ENCODE measurements at regions of chr17 and their contacts with region 1.

Region 1: GRCh38 chr17:13776027-13776588 is 174.4 kb upstream of the HS3ST3A1 start:
- DNase-seq: peak; percentile 78
- H3K4me3 Mint-ChIP-seq: peak overlapping the region; percentile 22
- H3K27ac Mint-ChIP-seq: peak overlapping the region; percentile 80
- H3K4me1 Mint-ChIP-seq: peaks cover 25% of the 10 kb centered on the region
- H3K27me3 Mint-ChIP-seq: no peaks in the 10 kb centered on the region
- CTCF ChIP-seq: no peak

Region 2: DNA sequence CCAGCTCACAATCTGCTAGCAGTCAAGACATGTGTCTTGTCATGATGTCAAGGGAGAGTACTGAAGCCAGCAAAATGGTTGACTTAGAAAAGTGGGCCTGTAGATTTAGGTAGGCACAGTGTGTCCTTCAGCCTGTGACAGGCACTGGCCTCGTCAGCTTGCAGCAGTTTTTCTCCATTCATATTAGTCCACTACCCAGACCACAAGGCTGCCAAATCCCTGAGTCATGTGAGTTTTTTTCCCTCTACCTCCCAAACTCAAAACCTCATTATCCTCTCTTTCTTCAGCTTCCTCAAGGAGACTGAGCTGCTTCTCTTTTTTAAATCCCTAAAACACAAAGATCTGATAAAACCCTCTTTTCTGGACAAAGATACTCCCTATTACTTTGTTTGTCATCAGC is 71.8 kb before region 1 on chr17:
- CTCF ChIA-PET with region 1: no interaction called
- POLR2A ChIA-PET with region 1: no interaction called
- intact Hi-C with region 1: no loop called
- DNase-seq: peak; percentile 35
- H3K4me3 Mint-ChIP-seq: no peak overlapping the region
- H3K27ac Mint-ChIP-seq: no peak overlapping the region
- H3K4me1 Mint-ChIP-seq: peaks cover 11% of the 10 kb centered on the region
- H3K27me3 Mint-ChIP-seq: no peaks in the 10 kb centered on the region
- CTCF ChIP-seq: no peak

Region 3: DNA sequence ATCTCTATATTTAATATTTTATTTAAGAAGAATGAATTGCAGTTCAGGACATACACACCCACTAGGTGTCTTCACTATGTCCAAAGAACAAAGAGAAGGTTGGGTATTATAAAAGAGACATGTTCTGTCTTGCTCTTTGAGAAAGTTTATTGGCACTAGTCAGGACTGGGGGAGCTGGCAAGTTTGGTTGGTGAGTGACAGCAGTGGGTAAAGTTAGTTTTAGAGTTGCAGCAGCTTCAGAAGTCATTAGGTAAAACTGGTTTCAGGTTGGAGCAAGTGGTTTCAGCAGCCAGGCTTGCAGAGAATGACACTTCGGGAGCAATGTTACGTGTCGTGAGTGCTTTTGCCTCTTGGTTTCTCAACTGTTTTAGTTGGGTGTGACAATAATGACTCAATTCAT is 32.2 kb before region 1 on chr17:
- CTCF ChIA-PET with region 1: interaction called, 3 read pairs
- POLR2A ChIA-PET with region 1: interaction called, 10 read pairs
- intact Hi-C with region 1: no loop called
- DNase-seq: peak; percentile 35
- H3K4me3 Mint-ChIP-seq: no peak overlapping the region
- H3K27ac Mint-ChIP-seq: peak overlapping the region; percentile 44
- H3K4me1 Mint-ChIP-seq: peaks cover 8% of the 10 kb centered on the region
- H3K27me3 Mint-ChIP-seq: no peaks in the 10 kb centered on the region
- CTCF ChIP-seq: no peak

Region 4: GRCh38 chr17:13931800-13932460 is 155.8 kb after region 1 on chr17:
- CTCF ChIA-PET with region 1: no interaction called
- POLR2A ChIA-PET with region 1: interaction called, 10 read pairs
- intact Hi-C with region 1: no loop called
- DNase-seq: peak; percentile 94
- H3K4me3 Mint-ChIP-seq: no peak overlapping the region
- H3K27ac Mint-ChIP-seq: peak overlapping the region; percentile 50
- H3K4me1 Mint-ChIP-seq: peaks cover 40% of the 10 kb centered on the region
- H3K27me3 Mint-ChIP-seq: no peaks in the 10 kb centered on the region
- CTCF ChIP-seq: no peak

Region 5: DNA sequence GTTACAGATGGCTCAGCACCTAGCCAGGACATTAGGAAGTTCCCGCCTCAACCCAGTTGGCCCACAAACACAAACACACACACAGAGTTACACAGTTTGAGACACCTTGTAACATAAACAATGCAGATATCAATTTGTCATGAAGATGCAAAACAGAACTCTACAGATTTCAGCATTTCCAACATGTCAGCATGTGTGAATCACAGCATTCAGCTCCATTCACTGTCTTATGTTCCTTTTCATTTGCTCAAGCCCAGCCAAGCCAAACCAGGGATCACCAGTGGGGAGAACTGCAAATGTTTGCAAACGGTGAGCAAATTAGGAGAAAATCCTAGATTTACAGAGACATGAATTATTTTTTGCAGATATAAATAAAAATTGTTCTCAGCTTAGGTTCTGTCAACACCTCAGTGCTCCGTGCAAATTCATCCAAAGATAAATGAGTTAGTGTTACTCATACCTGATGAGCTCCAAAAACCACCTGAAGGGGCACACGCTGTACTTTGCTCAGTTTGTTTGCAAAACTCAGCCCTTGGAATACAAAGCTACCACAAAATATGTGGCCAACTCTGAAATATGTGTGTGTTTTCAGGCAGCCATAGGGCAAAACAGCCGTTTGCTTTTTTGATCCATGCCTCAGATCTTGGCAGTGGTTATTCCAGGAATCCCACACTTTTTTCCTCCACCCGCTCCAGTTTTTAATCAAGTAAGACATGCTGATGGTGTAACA is 276.9 kb after region 1 on chr17:
- CTCF ChIA-PET with region 1: interaction called, 4 read pairs
- POLR2A ChIA-PET with region 1: interaction called, 12 read pairs
- intact Hi-C with region 1: no loop called
- DNase-seq: peak; percentile 60
- H3K4me3 Mint-ChIP-seq: peak overlapping the region; percentile 44
- H3K27ac Mint-ChIP-seq: peak overlapping the region; percentile 76
- H3K4me1 Mint-ChIP-seq: peaks cover 13% of the 10 kb centered on the region
- H3K27me3 Mint-ChIP-seq: no peaks in the 10 kb centered on the region
- CTCF ChIP-seq: no peak

Measured in MCF 10A (cell line).